GM12878 (cell line): ENCODE measurements at regions of chr1 and their contacts with region 1.

Region 1: GRCh38 chr1:38818175-38818976 is 41.2 kb downstream of the RRAGC start:
- DNase-seq: no peak
- ATAC-seq: peak; percentile 66
- H3K4me3 ChIP-seq: no peak overlapping the region
- H3K27ac ChIP-seq: no peak overlapping the region
- H3K4me1 ChIP-seq: peaks cover 11% of the 10 kb centered on the region
- H3K27me3 ChIP-seq: no peaks in the 10 kb centered on the region
- CTCF ChIP-seq: peak; percentile 63 to 71 (median 67); a peak in 5 of 6 replicates
- EP300 ChIP-seq: no peak
- POLR2A ChIP-seq: no peak
- RAD21 ChIP-seq: peak; percentile 69

Region 2: DNA sequence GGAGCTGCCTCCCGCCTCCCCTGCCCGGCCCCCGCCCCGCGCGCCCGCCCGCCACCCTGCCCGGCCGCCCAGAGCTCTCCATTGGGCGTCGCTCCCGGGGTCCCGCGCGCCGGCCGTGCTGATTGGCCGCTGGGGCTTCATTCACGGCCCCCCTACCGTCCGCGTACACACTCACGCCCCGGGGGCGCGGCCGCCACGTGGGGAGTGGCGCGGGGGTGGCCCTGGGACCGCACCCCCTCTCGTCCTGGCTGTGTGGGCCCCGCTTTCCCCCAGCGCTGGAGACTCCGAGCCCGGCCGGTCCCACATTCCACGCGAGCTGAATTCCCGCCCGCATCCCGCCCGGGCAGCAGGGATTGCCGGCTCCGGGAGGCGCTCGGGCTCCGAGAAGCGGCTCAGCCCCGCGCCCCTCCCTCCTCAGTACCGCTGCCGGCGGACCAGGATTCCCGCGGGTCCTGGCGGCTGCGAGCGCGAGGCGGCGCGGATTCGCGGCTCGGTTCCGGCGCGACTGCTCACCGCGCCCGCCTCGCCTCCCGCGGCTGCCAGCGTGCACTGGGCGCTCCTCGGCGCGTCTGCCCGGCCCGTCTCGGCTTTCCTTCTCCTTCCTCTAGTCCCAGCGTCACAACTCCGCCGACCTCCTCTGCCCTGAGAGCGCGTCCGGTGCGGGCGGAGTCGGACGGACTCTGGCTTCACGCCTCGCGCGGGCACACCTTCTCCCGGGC is 771.3 kb before region 1 on chr1:
- CTCF ChIA-PET with region 1: interaction called, 3 read pairs
- POLR2A ChIA-PET with region 1: no interaction called
- RAD21 ChIA-PET with region 1: interaction called, 3 read pairs
- SMC1A ChIA-PET with region 1: no interaction called
- in situ Hi-C with region 1: no loop called
- intact Hi-C with region 1: loop called (anchors 5 kb)
- DNase-seq: no peak
- ATAC-seq: peak; percentile 87
- H3K4me3 ChIP-seq: peak overlapping the region; percentile 57; the same call in 1 of the 2 replicates
- H3K27ac ChIP-seq: no peak overlapping the region
- H3K4me1 ChIP-seq: peaks cover 15% of the 10 kb centered on the region
- H3K27me3 ChIP-seq: peaks cover 9 to 13% of the 10 kb centered on the region in 2 experiments
- CTCF ChIP-seq: no peak
- EP300 ChIP-seq: no peak
- POLR2A ChIP-seq: no peak
- RAD21 ChIP-seq: no peak

Region 3: DNA sequence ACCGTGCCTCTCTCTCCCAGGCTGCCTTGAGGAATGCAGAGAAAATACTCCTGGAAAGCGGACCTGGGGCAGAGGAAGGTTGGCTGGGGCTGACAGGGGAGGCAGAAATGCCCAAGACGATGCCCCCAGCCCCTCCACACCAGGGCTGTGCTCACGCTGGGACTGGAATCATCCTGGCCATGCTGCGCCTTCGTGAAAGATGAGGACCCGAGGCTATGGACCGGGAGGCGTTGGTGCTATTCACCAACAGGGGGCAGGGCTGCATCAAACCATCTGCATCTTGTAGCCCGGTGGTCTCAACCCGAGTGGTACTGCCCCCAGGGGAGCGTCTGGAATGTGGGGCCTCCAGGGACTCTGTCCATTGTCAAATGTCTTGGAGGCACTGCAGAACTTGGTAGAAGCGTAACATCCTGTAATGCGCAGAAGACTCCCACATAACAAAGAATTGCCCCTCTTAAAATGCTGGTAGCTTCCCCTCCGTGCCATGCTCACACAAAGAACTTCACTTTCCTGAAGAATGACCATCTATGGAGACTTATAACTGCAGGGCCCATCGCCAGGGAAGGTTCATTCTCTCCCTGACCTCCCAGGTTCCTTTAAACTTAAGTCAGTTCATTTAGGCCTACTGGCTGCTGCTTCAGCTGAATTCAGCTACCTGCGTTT is 210.0 kb before region 1 on chr1:
- CTCF ChIA-PET with region 1: interaction called, 10 read pairs
- POLR2A ChIA-PET with region 1: interaction called, 5 read pairs
- RAD21 ChIA-PET with region 1: interaction called, 4 read pairs
- SMC1A ChIA-PET with region 1: interaction called, 8 read pairs
- in situ Hi-C with region 1: no loop called
- intact Hi-C with region 1: loop called (anchors 5 kb)
- DNase-seq: no peak
- ATAC-seq: peak; percentile 53; the same call in 2 of the 3 replicates
- H3K4me3 ChIP-seq: no peak overlapping the region
- H3K27ac ChIP-seq: no peak overlapping the region
- H3K4me1 ChIP-seq: no peaks in the 10 kb centered on the region
- H3K27me3 ChIP-seq: peaks cover 0 to 3% of the 10 kb centered on the region in 2 experiments; a peak in 3 of 4 replicates
- CTCF ChIP-seq: peak; percentile 50 to 63 (median 59); a peak in 5 of 6 replicates
- EP300 ChIP-seq: no peak
- POLR2A ChIP-seq: no peak
- RAD21 ChIP-seq: peak; percentile 34

Region 4: DNA sequence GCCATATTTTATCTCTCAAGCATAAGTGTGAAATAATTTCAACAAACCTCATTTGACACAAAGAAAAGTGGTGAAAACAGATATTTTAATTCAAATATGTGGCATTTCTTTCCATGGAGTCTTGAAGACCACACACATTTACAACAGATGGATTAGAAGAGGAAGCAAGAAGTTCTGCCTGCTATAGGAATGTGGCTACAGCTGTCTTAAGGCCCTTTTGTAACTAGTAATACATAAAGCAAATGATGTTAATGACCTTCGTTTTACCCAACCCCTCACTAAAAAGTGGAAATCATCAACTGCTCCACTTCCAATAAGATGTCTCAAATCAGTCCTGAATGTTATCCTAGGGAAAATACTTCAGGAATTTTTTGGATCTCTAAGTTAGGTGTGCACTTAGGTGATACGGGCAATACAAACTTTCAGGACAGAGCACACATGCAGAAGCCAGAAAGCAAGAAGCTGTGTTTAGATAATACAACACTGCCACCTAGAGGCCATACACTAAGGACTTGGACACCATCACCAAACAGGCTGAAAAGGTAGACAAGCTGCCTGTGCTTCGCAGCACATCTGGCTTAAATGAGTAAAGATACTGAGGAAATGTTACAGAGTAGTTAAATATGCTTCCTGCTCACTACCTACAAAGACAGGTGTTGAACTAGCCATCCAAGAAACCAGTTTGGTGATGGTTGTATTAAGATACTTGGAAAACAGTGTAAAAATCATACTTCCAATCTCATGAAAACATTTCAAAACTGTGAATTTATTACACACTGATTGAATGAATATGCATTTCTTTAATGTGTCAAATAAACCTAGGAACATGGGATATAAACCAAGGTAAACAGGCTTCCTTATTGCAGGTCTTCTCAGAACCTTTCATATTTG is 16.8 kb after region 1 on chr1:
- CTCF ChIA-PET with region 1: interaction called, 33 read pairs
- POLR2A ChIA-PET with region 1: no interaction called
- RAD21 ChIA-PET with region 1: interaction called, 8 read pairs
- SMC1A ChIA-PET with region 1: interaction called, 3 read pairs
- in situ Hi-C with region 1: no loop called
- intact Hi-C with region 1: no loop called
- DNase-seq: peak; percentile 60
- ATAC-seq: peak; percentile 98
- H3K4me3 ChIP-seq: no peak overlapping the region
- H3K27ac ChIP-seq: no peak overlapping the region
- H3K4me1 ChIP-seq: no peaks in the 10 kb centered on the region
- H3K27me3 ChIP-seq: peaks cover 0 to 2% of the 10 kb centered on the region in 2 experiments; a peak in 2 of 4 replicates
- CTCF ChIP-seq: peak; percentile 68 to 86 (median 77)
- EP300 ChIP-seq: no peak
- POLR2A ChIP-seq: no peak
- RAD21 ChIP-seq: peak; percentile 84